Cardiac septum (tissue), 1 donor: ENCODE measurements at regions of chr7 and their contacts with region 1.

Region 1: DNA sequence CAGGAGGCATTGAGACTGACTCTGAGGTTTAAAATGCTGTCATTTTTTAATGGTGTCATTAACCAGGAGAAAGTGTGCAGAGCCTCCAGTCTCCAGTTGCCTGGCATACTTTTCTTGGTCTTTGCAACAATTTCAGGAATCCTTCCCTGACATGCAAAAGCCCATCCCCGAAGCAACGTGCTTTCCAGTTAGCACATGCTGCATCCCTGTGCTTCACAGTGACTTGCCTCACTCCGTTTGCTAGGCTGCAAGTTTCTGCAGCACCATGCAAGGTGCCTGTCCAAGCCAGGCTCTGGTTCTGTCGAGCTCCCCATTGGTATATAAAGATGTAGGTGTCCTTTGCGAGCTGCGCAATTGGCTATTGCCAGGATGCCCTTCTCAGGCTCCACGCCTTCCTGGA is 135.0 kb downstream of the GALNT17 start:
- DNase-seq: no peak

Region 2: DNA sequence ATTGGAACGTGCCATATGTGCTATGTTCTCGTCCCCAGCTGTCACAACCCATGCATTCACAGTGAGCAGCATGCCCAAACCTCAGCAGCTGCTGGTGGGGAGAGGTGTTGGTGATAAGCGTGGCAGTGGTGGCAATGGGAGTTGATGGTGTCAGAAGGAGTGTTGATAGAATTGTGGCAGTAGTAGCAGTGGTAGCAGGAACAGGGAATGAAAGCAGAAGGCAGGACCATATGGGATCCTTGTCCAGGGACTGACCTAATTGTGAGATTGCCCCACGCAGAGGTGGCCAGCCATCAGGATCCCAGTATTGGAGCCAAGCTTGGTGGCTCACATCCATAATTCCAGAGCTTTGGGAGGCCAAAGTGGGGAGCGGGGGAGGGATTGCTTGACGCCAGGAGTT is 141.4 kb after region 1 on chr7:
- intact Hi-C with region 1: loop called (anchors 10 kb)
- DNase-seq: peak; percentile 83

Region 3: DNA sequence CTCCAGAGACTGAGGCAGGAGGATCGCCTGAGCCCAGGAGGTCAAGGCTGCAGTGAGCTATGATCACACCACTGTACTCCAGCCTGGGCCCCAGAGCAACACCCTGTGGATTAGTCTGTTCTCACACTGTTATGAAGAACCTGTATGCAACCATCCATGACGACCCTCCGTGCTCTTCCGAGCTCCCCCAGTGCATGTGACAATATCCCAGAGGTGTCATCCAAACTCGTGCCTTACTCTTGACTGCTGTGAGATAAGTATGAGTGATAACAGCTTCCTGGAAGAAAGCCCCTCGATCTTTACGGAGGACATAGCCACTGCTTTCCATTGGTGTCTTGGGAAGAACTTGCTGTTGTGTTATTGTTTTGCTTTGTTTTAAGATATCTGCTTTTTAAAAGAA is 456.9 kb after region 1 on chr7:
- intact Hi-C with region 1: loop called (anchors 10 kb)
- DNase-seq: no peak